Right lobe of liver (tissue), 6 donors: ENCODE measurements at regions of chr3 and their contacts with region 1.

Region 1: DNA sequence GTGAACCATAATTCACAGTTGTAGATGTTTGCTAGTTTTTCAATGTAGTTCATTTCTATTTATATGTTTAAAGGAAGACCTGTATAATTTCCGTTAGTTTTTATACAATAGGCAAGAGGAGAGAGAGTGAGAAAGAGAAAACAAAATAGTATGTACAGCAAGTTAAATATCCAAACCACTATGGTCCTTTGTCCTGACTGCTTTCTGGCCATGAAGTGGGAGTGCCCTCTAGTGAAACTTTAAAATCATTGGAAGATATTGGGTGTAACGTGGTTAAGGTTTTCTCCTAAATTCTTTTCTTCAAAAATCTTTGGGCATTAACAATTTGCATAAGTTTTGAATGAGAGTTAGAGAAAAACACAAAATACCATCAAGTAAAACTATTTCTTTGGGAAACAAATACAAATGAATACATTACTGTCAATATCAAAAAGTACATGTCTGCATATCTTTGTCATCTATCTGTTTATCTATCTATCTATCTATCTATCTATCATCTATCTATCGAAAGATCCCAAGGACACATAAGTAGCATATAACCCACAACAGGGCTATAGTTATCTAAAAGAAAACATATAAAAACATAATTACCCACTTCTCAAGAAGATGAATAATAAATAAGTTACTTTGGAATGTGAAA is 534.6 kb upstream of the ATP11B start:
- DNase-seq: no peak
- ATAC-seq: peak; percentile 62 to 84 (median 68)
- H3K4me3 ChIP-seq: no peak overlapping the region
- H3K27ac ChIP-seq: no peak overlapping the region
- H3K4me1 ChIP-seq: no peaks in the 10 kb centered on the region
- H3K27me3 ChIP-seq: no peaks in the 10 kb centered on the region
- CTCF ChIP-seq: peak; percentile 55 to 71 (median 68)
- POLR2A ChIP-seq: no peak

Region 2: GRCh38 chr3:181700168-181701087 is 558.2 kb before region 1 on chr3:
- intact Hi-C with region 1: loop called in 1 of 2 experiments (anchors 10 kb)
- DNase-seq: peak in 1 of 3 donors; percentile 68
- ATAC-seq: peak; percentile 83 to 90 (median 84)
- H3K4me3 ChIP-seq: no peak overlapping the region
- H3K27ac ChIP-seq: no peak overlapping the region
- H3K4me1 ChIP-seq: peaks cover 0 to 29% (median 5%) of the 10 kb centered on the region in 4 donors
- H3K27me3 ChIP-seq: peaks cover 8 to 72% of the 10 kb centered on the region in 2 donors
- CTCF ChIP-seq: peak; percentile 55 to 92 (median 84)
- POLR2A ChIP-seq: no peak

Region 3: GRCh38 chr3:182370949-182371348 is 112.3 kb after region 1 on chr3:
- intact Hi-C with region 1: no loop called
- DNase-seq: no peak
- ATAC-seq: no peak
- H3K4me3 ChIP-seq: no peak overlapping the region
- H3K27ac ChIP-seq: no peak overlapping the region
- H3K4me1 ChIP-seq: no peaks in the 10 kb centered on the region
- H3K27me3 ChIP-seq: no peaks in the 10 kb centered on the region
- CTCF ChIP-seq: no peak
- POLR2A ChIP-seq: no peak

Region 4: DNA sequence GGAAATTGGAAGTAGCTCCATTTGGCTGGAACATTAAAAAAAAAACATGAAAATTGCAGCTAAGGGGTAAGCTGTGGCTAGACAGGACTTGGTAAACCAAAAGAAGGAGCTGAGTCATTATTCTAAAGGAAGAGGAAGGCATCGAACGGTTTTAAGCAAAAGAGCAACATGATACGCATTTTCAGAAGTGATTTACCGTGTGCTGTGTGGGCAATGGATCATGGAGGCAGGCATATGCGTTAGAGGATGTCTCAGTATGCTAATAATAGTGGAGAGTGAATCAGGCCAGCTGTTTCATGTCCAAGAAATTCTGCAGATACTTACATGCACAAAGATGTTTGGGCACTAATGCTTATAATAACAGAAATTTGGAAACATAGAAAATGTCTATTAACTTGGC is 125.6 kb after region 1 on chr3:
- intact Hi-C with region 1: no loop called
- DNase-seq: no peak
- ATAC-seq: no peak
- H3K4me3 ChIP-seq: no peak overlapping the region
- H3K27ac ChIP-seq: no peak overlapping the region
- H3K4me1 ChIP-seq: no peaks in the 10 kb centered on the region
- H3K27me3 ChIP-seq: no peaks in the 10 kb centered on the region
- CTCF ChIP-seq: no peak
- POLR2A ChIP-seq: no peak